Endothelial cell of umbilical vein (primary cell): ENCODE measurements at regions of chr6 and their contacts with region 1.

Region 1: GRCh38 chr6:84764332-84765049 is at the start of gene TBX18:
- DNase-seq: peak; percentile 99
- H3K4me3 ChIP-seq: peak within 1 kb of the TSS; percentile 63 to 95 (median 68)
- H3K27ac ChIP-seq: peak within 1 kb of the TSS; percentile 79
- H3K4me1 ChIP-seq: peaks cover 34% of the 10 kb centered on the region
- H3K27me3 ChIP-seq: peaks cover 27 to 38% of the 10 kb centered on the region in 2 experiments
- CTCF ChIP-seq: peak in 1 of 2 donors; percentile 25
- POLR2A ChIP-seq: peak; percentile 88
- total RNA-seq, gene TBX18: 28.4 and 35.3 TPM in 2 replicates

Region 2: GRCh38 chr6:84422380-84422968 is 342.0 kb before region 1 on chr6:
- CTCF ChIA-PET with region 1: interaction called, 170 read pairs
- POLR2A ChIA-PET with region 1: interaction called, 3 read pairs
- dilution Hi-C with region 1: no loop called
- intact Hi-C with region 1: loop called (anchors 1 kb)
- DNase-seq: peak; percentile 77
- H3K4me3 ChIP-seq: no peak overlapping the region
- H3K27ac ChIP-seq: no peak overlapping the region
- H3K4me1 ChIP-seq: no peaks in the 10 kb centered on the region
- H3K27me3 ChIP-seq: no peaks in the 10 kb centered on the region
- CTCF ChIP-seq: peak; percentile 93 to 95
- POLR2A ChIP-seq: no peak

Region 3: GRCh38 chr6:84575264-84575663 is 189.2 kb before region 1 on chr6:
- CTCF ChIA-PET with region 1: interaction called, 11 read pairs
- POLR2A ChIA-PET with region 1: no interaction called
- dilution Hi-C with region 1: no loop called
- intact Hi-C with region 1: loop called (anchors 1 kb)
- DNase-seq: peak; percentile 89
- H3K4me3 ChIP-seq: no peak overlapping the region
- H3K27ac ChIP-seq: peak overlapping the region; percentile 91
- H3K4me1 ChIP-seq: peaks cover 17% of the 10 kb centered on the region
- H3K27me3 ChIP-seq: no peaks in the 10 kb centered on the region
- CTCF ChIP-seq: no peak
- POLR2A ChIP-seq: peak; percentile 61

Region 4: DNA sequence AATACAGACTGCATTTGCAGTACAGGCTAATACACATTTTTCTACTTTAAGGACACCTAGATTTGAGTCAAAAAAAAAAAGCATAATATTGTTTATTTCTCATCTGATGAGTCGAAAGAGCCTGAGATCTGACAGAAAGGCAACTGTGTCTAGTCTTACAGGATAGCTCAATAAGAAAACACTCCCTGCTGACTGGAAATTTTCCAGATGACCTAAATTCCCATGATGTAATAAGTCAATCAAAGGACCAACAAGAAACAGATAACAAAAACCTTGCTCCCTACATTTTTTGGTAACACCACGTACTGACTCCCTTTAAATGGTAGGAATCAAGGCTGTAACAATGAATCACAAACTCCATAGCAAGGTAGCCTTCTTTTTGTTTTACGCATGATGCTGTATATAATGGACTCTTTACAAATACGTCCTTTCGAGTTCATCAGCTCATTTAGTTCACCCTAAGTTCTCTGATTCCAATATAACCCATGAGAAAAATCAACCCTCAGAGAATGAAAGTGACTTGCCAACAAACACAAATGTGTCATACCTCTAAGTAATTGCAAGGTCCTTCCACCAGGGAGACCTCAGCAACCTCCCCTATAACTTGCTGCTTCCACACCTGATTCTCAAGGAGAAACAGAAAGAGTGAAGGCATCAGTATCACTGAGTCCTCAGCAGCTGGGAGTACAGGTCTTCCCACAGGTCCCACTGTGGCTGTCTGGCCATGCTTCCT is 12.2 kb before region 1 on chr6:
- CTCF ChIA-PET with region 1: interaction called, 23 read pairs
- POLR2A ChIA-PET with region 1: no interaction called
- dilution Hi-C with region 1: no loop called
- intact Hi-C with region 1: no loop called
- DNase-seq: no peak
- H3K4me3 ChIP-seq: no peak overlapping the region
- H3K27ac ChIP-seq: no peak overlapping the region
- H3K4me1 ChIP-seq: peaks cover 2% of the 10 kb centered on the region
- H3K27me3 ChIP-seq: no peaks in the 10 kb centered on the region
- CTCF ChIP-seq: peak in 1 of 2 donors; percentile 9
- POLR2A ChIP-seq: no peak

Region 5: GRCh38 chr6:84798257-84798656 is 33.8 kb after region 1 on chr6:
- CTCF ChIA-PET with region 1: no interaction called
- POLR2A ChIA-PET with region 1: no interaction called
- dilution Hi-C with region 1: no loop called
- intact Hi-C with region 1: no loop called
- DNase-seq: peak; percentile 94
- H3K4me3 ChIP-seq: no peak overlapping the region
- H3K27ac ChIP-seq: no peak overlapping the region
- H3K4me1 ChIP-seq: peaks cover 22% of the 10 kb centered on the region
- H3K27me3 ChIP-seq: no peaks in the 10 kb centered on the region
- CTCF ChIP-seq: no peak
- POLR2A ChIP-seq: no peak

Region 6: DNA sequence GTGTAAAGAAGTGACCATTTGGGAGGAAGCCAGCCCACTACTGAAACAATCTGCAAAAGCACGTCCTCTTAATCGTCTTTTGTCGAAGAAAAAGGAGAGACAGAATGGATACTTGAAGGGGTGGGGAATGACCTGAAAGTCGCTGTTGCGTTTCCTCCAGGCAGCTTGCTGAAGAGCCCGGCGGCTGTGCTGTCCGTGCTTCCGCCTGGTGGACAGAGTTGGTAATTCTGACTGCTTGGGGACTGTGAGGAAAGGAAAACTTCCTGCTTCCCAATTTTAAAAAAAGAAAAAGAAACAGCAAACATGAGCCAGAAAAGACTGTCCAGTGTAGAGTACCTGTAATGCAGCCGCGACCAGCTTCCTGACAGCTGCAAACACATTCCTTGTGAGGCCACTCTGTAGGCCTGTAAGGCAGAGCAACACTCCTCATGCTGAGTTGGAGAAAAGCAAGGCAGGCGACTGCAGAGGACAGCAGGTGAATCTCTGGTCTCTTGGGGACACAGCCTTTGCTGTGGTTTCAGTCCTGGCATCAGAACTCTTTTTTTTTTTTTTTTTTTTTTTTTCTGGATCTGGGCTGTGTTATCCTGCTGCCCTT is 251.0 kb after region 1 on chr6:
- CTCF ChIA-PET with region 1: no interaction called
- POLR2A ChIA-PET with region 1: no interaction called
- dilution Hi-C with region 1: no loop called
- intact Hi-C with region 1: loop called (anchors 1 kb)
- DNase-seq: peak; percentile 83
- H3K4me3 ChIP-seq: no peak overlapping the region
- H3K27ac ChIP-seq: no peak overlapping the region
- H3K4me1 ChIP-seq: no peaks in the 10 kb centered on the region
- H3K27me3 ChIP-seq: peaks cover 9% of the 10 kb centered on the region in 2 experiments
- CTCF ChIP-seq: peak; percentile 80 to 82
- POLR2A ChIP-seq: no peak

Region 7: GRCh38 chr6:85460921-85461797 is 696.7 kb after region 1 on chr6:
- CTCF ChIA-PET with region 1: no interaction called
- POLR2A ChIA-PET with region 1: no interaction called
- dilution Hi-C with region 1: no loop called
- intact Hi-C with region 1: loop called (anchors 5 kb)
- DNase-seq: peak; percentile 61
- H3K4me3 ChIP-seq: peak overlapping the region in 1 of 3 experiments; percentile 8
- H3K27ac ChIP-seq: peak overlapping the region; percentile 100
- H3K4me1 ChIP-seq: peaks cover 90% of the 10 kb centered on the region
- H3K27me3 ChIP-seq: no peaks in the 10 kb centered on the region
- CTCF ChIP-seq: no peak
- POLR2A ChIP-seq: no peak